PC-3 (cell line): ENCODE measurements at regions of chr1 and their contacts with region 1.

Region 1: DNA sequence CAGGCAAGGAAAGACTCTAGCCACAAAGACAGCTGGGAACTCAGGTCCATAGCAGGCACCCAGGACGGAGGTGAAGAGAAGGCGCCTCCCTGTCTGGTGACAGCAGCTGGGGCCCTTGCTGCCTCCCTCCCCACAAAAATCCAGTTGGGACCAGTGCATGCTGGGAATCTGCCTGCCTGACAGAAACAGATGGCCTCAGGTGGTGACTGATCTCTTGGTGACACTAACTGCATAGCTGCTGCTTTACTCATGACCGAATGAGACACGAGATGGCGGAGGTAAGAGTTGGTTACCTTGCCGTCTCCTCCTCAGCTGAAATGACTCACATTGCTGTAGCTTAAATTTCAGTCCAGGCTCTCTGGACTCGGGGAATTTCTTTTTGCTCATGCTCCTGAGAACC is 130.3 kb downstream of the FGGY start:
- DNase-seq: peak; percentile 97
- ATAC-seq: peak; percentile 90
- H3K4me3 ChIP-seq: peak overlapping the region; percentile 26; the same call in 1 of the 2 replicates
- H3K27ac ChIP-seq: peak overlapping the region; percentile 75
- H3K4me1 ChIP-seq: peaks cover 55% of the 10 kb centered on the region
- H3K27me3 ChIP-seq: no peaks in the 10 kb centered on the region
- CTCF ChIP-seq: no peak

Region 2: GRCh38 chr1:59570524-59570923 is 143.4 kb after region 1 on chr1:
- CTCF ChIA-PET with region 1: no interaction called
- POLR2A ChIA-PET with region 1: no interaction called
- intact Hi-C with region 1: loop called (anchors 2 kb)
- DNase-seq: peak; percentile 60
- ATAC-seq: peak; percentile 92
- H3K4me3 ChIP-seq: no peak overlapping the region
- H3K27ac ChIP-seq: peak overlapping the region; percentile 54
- H3K4me1 ChIP-seq: peaks cover 16% of the 10 kb centered on the region
- H3K27me3 ChIP-seq: no peaks in the 10 kb centered on the region
- CTCF ChIP-seq: no peak

Region 3: GRCh38 chr1:59577774-59578173 is 150.6 kb after region 1 on chr1:
- CTCF ChIA-PET with region 1: no interaction called
- POLR2A ChIA-PET with region 1: interaction called, 12 read pairs
- intact Hi-C with region 1: no loop called
- DNase-seq: no peak
- ATAC-seq: no peak
- H3K4me3 ChIP-seq: no peak overlapping the region
- H3K27ac ChIP-seq: no peak overlapping the region
- H3K4me1 ChIP-seq: no peaks in the 10 kb centered on the region
- H3K27me3 ChIP-seq: no peaks in the 10 kb centered on the region
- CTCF ChIP-seq: no peak